K562 (cell line): ENCODE measurements at regions of chr18 and their contacts with region 1.

Region 1: DNA sequence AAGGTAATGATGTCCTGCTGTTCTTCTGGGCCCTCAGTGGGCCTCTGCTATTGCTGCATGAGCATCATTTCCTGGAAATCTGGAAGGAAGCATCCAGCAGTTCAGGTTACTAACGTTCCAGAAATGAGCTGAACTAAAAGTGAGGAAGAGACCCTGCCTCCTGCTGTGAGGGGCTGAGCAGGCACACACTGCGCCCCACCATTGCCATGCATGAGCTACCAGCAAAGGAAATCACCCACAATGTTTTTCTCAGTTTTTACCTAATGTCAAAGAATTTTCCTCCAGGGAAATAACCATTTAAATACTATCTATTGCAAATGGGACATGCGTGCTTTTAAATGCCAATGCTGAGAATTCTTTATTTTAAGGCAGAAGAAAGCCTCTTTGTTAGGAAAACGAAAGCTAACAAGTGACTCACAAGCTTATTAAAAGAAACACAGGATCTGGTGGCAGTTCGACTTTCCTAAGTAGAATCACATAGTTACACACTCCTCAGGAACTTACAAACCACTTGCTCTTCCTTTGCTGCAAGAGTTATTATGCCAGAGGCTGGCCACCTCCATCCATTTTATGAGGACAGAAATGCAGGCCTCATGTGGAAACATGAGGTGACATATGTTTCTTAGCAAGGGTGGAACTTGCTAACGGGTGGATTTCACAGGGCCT is 152.6 kb upstream of the TTC39C start:
- DNase-seq: no peak
- ATAC-seq: no peak
- H3K4me3 ChIP-seq: no peak overlapping the region
- H3K27ac ChIP-seq: no peak overlapping the region
- H3K4me1 ChIP-seq: no peaks in the 10 kb centered on the region
- H3K27me3 ChIP-seq: peaks cover 0 to 12% of the 10 kb centered on the region in 2 experiments; a peak in 1 of 5 replicates
- CTCF ChIP-seq: no peak
- EP300 ChIP-seq: no peak
- POLR2A ChIP-seq: no peak
- RAD21 ChIP-seq: no peak

Region 2: DNA sequence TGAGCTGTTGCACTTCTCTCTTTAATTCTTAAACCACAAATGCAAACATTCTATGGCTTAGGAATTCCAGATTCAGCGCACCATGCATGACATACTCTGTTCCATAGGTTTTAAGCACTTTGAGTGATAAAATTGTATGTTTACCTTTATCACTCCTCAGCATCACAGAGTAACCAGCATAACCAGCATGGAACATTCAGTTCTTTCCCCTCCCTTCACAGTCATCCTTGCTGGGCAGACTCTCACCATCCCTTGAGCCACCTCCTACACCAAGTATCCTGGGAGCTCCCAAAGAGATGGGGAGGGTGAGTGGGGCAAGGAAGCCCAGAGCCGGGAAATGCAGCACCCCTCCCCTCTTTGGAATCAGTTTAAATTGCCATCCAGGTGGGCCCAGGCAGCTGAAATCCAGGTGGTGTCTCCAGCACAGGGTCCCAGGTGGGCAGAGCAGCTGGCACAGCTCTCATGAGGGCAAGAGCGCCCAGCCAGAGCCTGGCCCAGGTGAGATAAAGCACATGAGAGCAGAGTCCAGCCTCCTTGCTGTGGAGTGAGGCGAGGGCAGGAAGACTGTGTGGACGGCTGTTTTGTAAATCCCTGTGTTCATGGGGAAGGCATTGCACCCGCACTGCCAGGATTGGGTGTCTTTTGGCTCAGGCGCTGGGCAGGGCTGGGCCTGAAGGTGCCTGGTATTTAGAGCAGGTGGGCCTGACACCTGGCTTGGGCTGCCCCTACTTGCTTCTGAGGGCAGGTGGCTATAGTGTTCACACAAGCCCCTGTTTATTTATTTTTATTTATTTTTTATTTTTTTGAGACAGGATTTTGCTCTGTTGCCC is 135.9 kb before region 1 on chr18:
- CTCF ChIA-PET with region 1: no interaction called
- POLR2A ChIA-PET with region 1: no interaction called
- in situ Hi-C with region 1: no loop called
- intact Hi-C with region 1: no loop called
- DNase-seq: no peak
- ATAC-seq: no peak
- H3K4me3 ChIP-seq: no peak overlapping the region
- H3K27ac ChIP-seq: no peak overlapping the region
- H3K4me1 ChIP-seq: peaks cover 0 to 10% of the 10 kb centered on the region in 2 experiments; a peak in 2 of 5 replicates
- H3K27me3 ChIP-seq: peaks cover 19 to 29% of the 10 kb centered on the region in 2 experiments
- CTCF ChIP-seq: no peak
- EP300 ChIP-seq: no peak
- POLR2A ChIP-seq: no peak
- RAD21 ChIP-seq: no peak

Region 3: GRCh38 chr18:25253136-25253535 is 1391.2 kb after region 1 on chr18:
- CTCF ChIA-PET with region 1: interaction called, 12 read pairs
- POLR2A ChIA-PET with region 1: no interaction called
- in situ Hi-C with region 1: no loop called
- intact Hi-C with region 1: no loop called
- DNase-seq: no peak
- ATAC-seq: no peak
- H3K4me3 ChIP-seq: no peak overlapping the region
- H3K27ac ChIP-seq: no peak overlapping the region
- H3K4me1 ChIP-seq: no peaks in the 10 kb centered on the region
- H3K27me3 ChIP-seq: no peaks in the 10 kb centered on the region
- CTCF ChIP-seq: no peak
- EP300 ChIP-seq: no peak
- POLR2A ChIP-seq: no peak
- RAD21 ChIP-seq: no peak